PC-9 (cell line): ENCODE measurements at regions of chr2 and their contacts with region 1.

Region 1: DNA sequence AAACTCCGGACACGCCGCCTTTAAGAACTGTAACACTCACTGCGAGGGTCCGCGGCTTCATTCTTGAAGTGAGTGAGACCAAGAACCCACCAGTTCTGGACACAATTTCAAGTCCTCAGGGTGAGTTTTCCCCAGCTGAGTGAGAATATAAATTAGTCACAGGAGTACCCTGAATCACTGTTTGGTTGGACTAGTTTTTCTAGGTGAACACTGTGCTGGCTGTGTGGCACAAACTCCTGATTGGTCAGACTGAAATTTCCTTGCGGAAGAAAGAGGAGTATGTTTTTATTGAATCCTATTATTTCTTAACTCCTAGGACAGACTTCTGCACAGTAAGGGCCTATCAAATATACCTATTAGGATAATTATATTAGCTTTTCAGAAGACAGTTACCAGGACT is 288.1 kb upstream of the UBE2E3 start:
- DNase-seq: no peak
- H3K4me3 ChIP-seq: no peak overlapping the region
- H3K27ac ChIP-seq: no peak overlapping the region
- H3K4me1 ChIP-seq: no peaks in the 10 kb centered on the region
- H3K27me3 ChIP-seq: no peaks in the 10 kb centered on the region
- CTCF ChIP-seq: no peak

Region 2: GRCh38 chr2:180630756-180631155 is 61.6 kb before region 1 on chr2:
- CTCF ChIA-PET with region 1: interaction called, 10 read pairs
- POLR2A ChIA-PET with region 1: no interaction called
- intact Hi-C with region 1: no loop called
- DNase-seq: no peak
- H3K4me3 ChIP-seq: no peak overlapping the region
- H3K27ac ChIP-seq: no peak overlapping the region
- H3K4me1 ChIP-seq: 0 out of 2 replicates have a peak, but pooled peaks cover 4% of the 10 kb centered on the region
- H3K27me3 ChIP-seq: no peaks in the 10 kb centered on the region
- CTCF ChIP-seq: no peak